Caco-2 (cell line): ENCODE measurements at regions of chr21 and their contacts with region 1.

Region 1: DNA sequence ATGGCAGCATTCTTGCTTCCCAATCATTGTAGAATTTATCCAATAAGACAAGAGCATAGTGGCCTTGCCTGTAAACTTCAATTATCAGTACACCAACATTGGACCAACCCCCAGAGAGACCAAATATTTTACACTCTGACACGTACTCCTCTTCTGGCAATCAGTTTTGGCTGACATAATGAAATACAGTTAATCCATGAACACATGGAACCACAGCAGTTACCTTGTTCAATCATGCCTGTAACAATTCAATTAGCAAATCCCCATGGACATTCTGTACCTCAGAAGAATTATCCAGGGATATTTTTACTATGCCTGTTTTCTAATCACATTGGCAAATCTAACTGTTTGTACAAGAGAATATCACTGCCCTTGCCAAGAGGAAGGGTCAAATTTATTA is 2162.0 kb downstream of the MRPL39 start:
- DNase-seq: no peak
- H3K4me3 ChIP-seq: no peak overlapping the region
- H3K4me3 Mint-ChIP-seq: no peak overlapping the region
- H3K27ac Mint-ChIP-seq: no peak overlapping the region
- H3K4me1 ChIP-seq: no peaks in the 10 kb centered on the region
- H3K4me1 Mint-ChIP-seq: no peaks in the 10 kb centered on the region
- H3K27me3 ChIP-seq: no peaks in the 10 kb centered on the region
- H3K27me3 Mint-ChIP-seq: no peaks in the 10 kb centered on the region
- CTCF ChIP-seq: no peak

Region 2: GRCh38 chr21:23152130-23152529 is 293.2 kb before region 1 on chr21:
- CTCF ChIA-PET with region 1: no interaction called
- POLR2A ChIA-PET with region 1: no interaction called
- intact Hi-C with region 1: loop called (anchors 5 kb)
- DNase-seq: no peak
- H3K4me3 ChIP-seq: no peak overlapping the region
- H3K4me3 Mint-ChIP-seq: no peak overlapping the region
- H3K27ac Mint-ChIP-seq: no peak overlapping the region
- H3K4me1 ChIP-seq: no peaks in the 10 kb centered on the region
- H3K4me1 Mint-ChIP-seq: no peaks in the 10 kb centered on the region
- H3K27me3 ChIP-seq: no peaks in the 10 kb centered on the region
- H3K27me3 Mint-ChIP-seq: no peaks in the 10 kb centered on the region
- CTCF ChIP-seq: no peak